ENCODE measurements at regions of chr2 and their contacts with region 1.

Region 1: GRCh38 chr2:246489-247144 is 17.2 kb downstream of the SH3YL1 start:
- DNase-seq: peak; percentile 37
- ATAC-seq: no peak
- H3K4me3 Mint-ChIP-seq: no peak overlapping the region
- H3K27ac Mint-ChIP-seq: no peak overlapping the region
- H3K4me1 Mint-ChIP-seq: peaks cover 3% of the 10 kb centered on the region
- H3K27me3 Mint-ChIP-seq: no peaks in the 10 kb centered on the region
- CTCF ChIP-seq: peak; percentile 70

Region 2: DNA sequence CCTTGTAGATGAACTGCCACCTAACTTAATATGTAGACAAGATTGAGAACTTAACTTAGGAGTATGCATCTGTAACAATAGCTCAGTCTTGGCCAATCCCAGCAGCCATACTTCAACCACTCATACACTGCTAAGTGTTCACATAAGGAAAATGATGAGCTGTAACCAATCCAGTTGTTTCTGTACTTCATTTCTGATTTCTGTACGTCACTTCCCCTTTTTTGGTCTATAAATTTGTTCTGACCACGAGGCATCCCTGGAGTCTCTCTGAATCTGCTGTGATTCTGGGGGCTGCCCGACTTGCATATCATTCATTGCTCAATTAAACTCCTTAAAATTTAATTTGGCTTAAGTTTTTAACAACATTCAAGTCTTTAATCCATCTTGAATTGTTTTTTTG is 10.8 kb after region 1 on chr2:
- CTCF ChIA-PET with region 1: interaction called, 12 read pairs
- POLR2A ChIA-PET with region 1: no interaction called
- intact Hi-C with region 1: no loop called
- DNase-seq: no peak
- ATAC-seq: no peak
- H3K4me3 Mint-ChIP-seq: no peak overlapping the region
- H3K27ac Mint-ChIP-seq: no peak overlapping the region
- H3K4me1 Mint-ChIP-seq: no peaks in the 10 kb centered on the region
- H3K27me3 Mint-ChIP-seq: no peaks in the 10 kb centered on the region
- CTCF ChIP-seq: no peak

Region 3: DNA sequence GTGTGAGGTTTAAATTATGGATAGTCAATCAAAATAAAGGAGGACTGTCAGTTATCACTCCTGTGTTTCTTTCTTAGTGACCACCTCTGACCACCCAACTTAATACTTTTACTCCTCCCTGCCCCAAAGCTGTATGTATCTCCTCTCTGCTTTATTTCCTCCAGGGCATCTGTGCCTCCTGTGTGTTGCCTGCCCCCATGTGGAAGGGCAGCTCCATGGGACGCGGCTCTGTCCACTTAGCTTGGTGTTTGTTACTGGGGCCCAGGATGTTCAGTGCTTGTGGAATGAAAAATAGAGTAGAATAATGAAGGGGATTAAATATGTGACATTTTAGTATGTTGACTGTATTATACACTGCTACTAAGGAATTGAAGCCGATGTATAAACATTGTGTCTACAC is 27.9 kb after region 1 on chr2:
- CTCF ChIA-PET with region 1: interaction called, 10 read pairs
- POLR2A ChIA-PET with region 1: no interaction called
- intact Hi-C with region 1: no loop called
- DNase-seq: no peak
- ATAC-seq: no peak
- H3K4me3 Mint-ChIP-seq: no peak overlapping the region
- H3K27ac Mint-ChIP-seq: no peak overlapping the region
- H3K4me1 Mint-ChIP-seq: peaks cover 25% of the 10 kb centered on the region
- H3K27me3 Mint-ChIP-seq: no peaks in the 10 kb centered on the region
- CTCF ChIP-seq: no peak

Region 4: DNA sequence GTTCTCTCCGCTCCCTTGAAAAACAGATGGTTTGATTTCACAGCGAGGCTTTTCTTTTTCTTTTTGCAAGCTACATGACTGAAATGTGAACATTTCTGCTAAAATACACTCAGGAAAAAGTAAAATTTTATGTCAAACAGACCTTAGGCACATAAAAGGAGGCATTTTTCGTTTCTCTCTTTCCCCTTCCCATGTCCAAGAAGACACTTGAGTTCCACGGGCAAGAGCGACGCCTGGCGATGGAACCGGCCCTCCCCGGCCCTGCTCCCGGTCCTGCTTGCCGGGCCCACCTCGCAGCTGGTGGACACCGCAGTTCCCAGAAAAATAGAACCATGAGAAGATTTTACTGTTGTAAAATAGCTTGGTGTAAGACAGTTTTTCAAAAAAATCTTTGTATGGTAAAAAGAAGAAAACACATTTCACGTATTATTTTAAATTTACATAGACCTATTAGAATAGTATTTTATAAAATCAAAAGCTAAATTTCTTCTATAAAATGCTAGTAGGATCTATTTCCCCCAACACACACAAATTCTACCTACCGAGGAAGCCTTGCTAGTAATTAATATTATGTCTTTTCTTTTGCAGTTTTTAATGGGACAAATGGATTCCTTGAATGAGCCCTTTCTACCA is 43.6 kb after region 1 on chr2:
- CTCF ChIA-PET with region 1: interaction called, 13 read pairs
- POLR2A ChIA-PET with region 1: interaction called, 3 read pairs
- intact Hi-C with region 1: no loop called
- DNase-seq: peak; percentile 63
- ATAC-seq: no peak
- H3K4me3 Mint-ChIP-seq: peak overlapping the region; percentile 49
- H3K27ac Mint-ChIP-seq: no peak overlapping the region
- H3K4me1 Mint-ChIP-seq: peaks cover 12% of the 10 kb centered on the region
- H3K27me3 Mint-ChIP-seq: peaks cover 28% of the 10 kb centered on the region
- CTCF ChIP-seq: peak; percentile 63

Region 5: DNA sequence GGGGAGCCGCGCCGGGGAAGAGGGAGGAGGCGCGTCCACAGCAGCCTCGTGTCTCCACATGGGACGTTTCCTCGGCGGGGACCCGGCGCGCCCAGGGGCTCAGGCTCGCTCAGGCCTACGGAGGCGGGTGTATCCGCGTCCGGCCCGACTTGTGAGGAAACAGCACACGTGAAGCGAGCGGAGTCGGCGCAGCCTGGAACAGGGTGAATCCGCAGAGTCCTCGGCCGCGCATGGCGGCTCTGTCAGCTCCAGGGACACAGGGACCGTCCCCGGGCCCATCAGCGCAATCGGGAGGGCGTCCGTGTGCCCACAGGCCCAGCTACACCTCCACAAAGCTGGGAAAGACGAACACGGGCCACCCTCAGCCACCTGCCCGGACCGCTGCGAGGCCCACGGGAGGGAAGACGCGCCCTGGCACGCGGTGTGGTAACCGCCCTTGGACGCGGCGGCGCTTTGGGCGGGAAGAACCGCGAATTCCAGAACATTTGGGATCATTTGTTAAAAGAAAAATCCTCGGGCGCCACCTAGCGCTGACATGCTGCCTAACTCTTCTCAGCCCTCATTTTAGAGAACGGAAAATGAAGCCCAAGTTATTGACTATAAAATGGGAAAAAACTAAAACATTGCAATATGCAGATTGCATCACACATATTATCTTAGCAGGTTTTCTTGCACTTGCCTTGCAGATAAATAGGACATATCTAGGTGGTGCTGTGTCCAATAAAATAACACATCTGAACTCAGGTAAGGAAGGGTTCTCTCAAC is 390.2 kb after region 1 on chr2:
- CTCF ChIA-PET with region 1: interaction called, 12 read pairs
- POLR2A ChIA-PET with region 1: no interaction called
- intact Hi-C with region 1: no loop called
- DNase-seq: peak; percentile 70
- ATAC-seq: peak; percentile 83
- H3K4me3 Mint-ChIP-seq: peak overlapping the region; percentile 60
- H3K27ac Mint-ChIP-seq: peak overlapping the region; percentile 63
- H3K4me1 Mint-ChIP-seq: peaks cover 2% of the 10 kb centered on the region
- H3K27me3 Mint-ChIP-seq: no peaks in the 10 kb centered on the region
- CTCF ChIP-seq: peak; percentile 97

Measured in activated CD8-positive, alpha-beta T cell treated with anti-CD3 and anti-CD28 coated beads for 36 hours (primary cell).